ENCODE measurements at regions of chr10 and their contacts with region 1.

Region 1: GRCh38 chr10:87734987-87735827 is 75.5 kb downstream of the PAPSS2 start:
- DNase-seq: peak; percentile 61
- H3K4me3 ChIP-seq: no peak overlapping the region
- H3K27ac ChIP-seq: no peak overlapping the region
- H3K4me1 ChIP-seq: no peaks in the 10 kb centered on the region
- CTCF ChIP-seq: peak; percentile 92

Region 2: GRCh38 chr10:87531908-87532622 is 203.1 kb before region 1 on chr10:
- CTCF ChIA-PET with region 1: no interaction called
- POLR2A ChIA-PET with region 1: no interaction called
- intact Hi-C with region 1: loop called (anchors 1 kb)
- DNase-seq: no peak
- H3K4me3 ChIP-seq: no peak overlapping the region
- H3K27ac ChIP-seq: no peak overlapping the region
- H3K4me1 ChIP-seq: no peaks in the 10 kb centered on the region
- CTCF ChIP-seq: no peak

Region 3: GRCh38 chr10:87684001-87684638 is 51.1 kb before region 1 on chr10:
- CTCF ChIA-PET with region 1: no interaction called
- POLR2A ChIA-PET with region 1: no interaction called
- intact Hi-C with region 1: no loop called
- DNase-seq: no peak
- H3K4me3 ChIP-seq: no peak overlapping the region
- H3K27ac ChIP-seq: no peak overlapping the region
- H3K4me1 ChIP-seq: no peaks in the 10 kb centered on the region
- CTCF ChIP-seq: no peak

Region 4: GRCh38 chr10:88763441-88763840 is 1028.2 kb after region 1 on chr10:
- CTCF ChIA-PET with region 1: no interaction called
- POLR2A ChIA-PET with region 1: no interaction called
- intact Hi-C with region 1: no loop called
- DNase-seq: no peak
- H3K4me3 ChIP-seq: no peak overlapping the region
- H3K27ac ChIP-seq: no peak overlapping the region
- H3K4me1 ChIP-seq: no peaks in the 10 kb centered on the region
- CTCF ChIP-seq: no peak